GM10248 (cell line): ENCODE measurements at regions of chr1 and their contacts with region 1.

Region 1: GRCh38 chr1:100543640-100544039 is 5.7 kb downstream of the GPR88 start:
- DNase-seq: peak; percentile 44
- CTCF ChIP-seq: peak; percentile 55

Region 2: DNA sequence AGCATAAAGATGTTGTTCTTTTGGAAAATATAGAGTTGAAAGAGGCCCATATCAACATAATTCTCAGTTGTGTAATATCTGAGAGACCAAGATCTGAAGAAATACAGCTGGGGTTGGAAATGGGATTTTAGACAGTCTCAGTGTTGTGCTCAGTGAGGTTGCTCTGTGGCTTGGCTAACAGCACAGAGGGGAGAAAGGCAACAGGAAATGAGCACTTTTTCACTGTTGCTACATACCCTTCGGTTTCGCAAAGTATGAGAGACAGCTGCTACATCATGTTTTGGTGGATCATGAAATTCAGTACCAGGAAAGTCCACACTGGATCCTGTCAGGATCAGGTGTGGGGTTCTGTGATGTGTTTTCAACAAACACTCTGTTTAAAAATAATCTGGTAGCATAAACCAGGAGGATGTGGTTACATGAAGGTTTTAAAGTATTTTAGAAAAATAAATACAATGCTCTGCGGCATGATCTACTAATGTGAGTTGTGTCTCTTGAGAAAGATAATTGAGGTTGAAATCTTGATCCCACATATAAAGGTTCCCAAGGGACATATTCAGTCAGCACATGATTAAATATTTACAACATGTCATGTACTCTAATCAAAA is 12.7 kb before region 1 on chr1:
- CTCF ChIA-PET with region 1: interaction called, 25 read pairs
- POLR2A ChIA-PET with region 1: no interaction called
- DNase-seq: peak; percentile 28
- CTCF ChIP-seq: no peak

Region 3: DNA sequence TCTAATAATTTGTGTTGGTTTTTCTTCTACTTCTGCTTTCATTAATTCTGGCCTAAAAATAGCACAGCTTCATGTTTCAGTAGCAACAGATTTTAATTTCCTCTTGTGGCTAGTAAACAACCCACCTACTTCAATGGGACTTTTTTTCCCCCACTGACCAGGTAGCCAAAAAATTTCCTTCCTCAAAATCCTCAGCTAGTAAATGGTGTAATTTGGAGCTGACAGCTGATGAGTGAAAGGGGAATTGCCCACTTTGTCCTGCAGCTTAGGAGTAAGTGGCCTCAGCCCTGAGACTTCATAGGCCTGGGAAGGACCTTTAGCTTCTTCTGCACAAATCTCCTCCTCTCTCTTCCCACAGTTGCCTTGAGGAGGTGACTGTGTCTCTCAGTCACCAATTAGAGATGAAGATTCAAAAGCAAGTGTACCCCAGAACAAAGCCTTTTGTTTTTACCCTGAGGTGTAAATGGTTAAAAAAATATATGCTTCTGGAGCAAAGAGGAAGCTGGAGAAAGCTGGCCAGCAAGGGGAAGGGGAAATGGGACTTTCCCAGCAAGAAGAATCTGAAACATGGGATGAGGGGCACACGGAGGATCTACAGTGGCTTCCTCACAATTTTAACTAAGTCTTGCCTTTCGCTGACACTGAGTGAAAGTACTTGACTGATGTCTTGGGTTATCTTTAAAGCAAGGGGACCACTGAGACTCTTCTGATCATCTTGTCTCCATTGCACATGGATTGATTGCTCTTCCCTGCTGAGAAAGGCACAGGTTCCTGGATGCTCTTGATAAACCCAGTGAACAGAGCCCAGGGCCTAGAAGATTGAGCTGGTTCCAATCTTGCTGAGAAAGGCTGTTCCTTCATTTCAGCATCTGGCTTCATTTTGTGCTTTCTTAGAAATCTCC is 140.1 kb after region 1 on chr1:
- CTCF ChIA-PET with region 1: no interaction called
- POLR2A ChIA-PET with region 1: no interaction called
- DNase-seq: no peak
- CTCF ChIP-seq: no peak